ENCODE measurements at regions of chr11 and their contacts with region 1.

Region 1: GRCh38 chr11:4072668-4073285 is 21.8 kb upstream of the RRM1 start:
- DNase-seq: no peak
- ATAC-seq: peak; percentile 95
- H3K4me3 ChIP-seq: no peak overlapping the region
- H3K27ac ChIP-seq: no peak overlapping the region
- H3K4me1 ChIP-seq: peaks cover 9% of the 10 kb centered on the region
- H3K27me3 ChIP-seq: no peaks in the 10 kb centered on the region
- CTCF ChIP-seq: peak; percentile 81

Region 2: DNA sequence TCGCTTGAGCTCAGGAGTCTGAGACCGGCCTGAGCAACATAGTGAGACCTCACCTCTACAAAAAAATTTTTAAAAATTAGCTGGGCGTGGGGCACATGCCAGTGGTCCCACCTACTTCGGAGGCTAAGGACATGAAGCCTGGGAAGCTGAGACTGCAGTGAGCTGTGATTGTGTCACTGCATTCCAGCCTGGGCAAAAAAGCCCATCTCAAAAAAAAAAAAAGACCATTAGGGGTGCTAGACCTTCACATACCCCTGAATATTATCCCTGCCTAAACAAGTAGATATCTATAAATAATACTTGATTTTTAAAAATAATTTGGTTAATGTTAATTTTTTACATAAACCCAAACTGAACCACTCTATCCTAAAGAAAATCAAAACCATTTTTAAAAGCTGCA is 299.6 kb before region 1 on chr11:
- intact Hi-C with region 1: no loop called
- DNase-seq: no peak
- ATAC-seq: no peak
- H3K4me3 ChIP-seq: no peak overlapping the region
- H3K27ac ChIP-seq: no peak overlapping the region
- H3K4me1 ChIP-seq: no peaks in the 10 kb centered on the region
- H3K27me3 ChIP-seq: no peaks in the 10 kb centered on the region
- CTCF ChIP-seq: no peak

Region 3: DNA sequence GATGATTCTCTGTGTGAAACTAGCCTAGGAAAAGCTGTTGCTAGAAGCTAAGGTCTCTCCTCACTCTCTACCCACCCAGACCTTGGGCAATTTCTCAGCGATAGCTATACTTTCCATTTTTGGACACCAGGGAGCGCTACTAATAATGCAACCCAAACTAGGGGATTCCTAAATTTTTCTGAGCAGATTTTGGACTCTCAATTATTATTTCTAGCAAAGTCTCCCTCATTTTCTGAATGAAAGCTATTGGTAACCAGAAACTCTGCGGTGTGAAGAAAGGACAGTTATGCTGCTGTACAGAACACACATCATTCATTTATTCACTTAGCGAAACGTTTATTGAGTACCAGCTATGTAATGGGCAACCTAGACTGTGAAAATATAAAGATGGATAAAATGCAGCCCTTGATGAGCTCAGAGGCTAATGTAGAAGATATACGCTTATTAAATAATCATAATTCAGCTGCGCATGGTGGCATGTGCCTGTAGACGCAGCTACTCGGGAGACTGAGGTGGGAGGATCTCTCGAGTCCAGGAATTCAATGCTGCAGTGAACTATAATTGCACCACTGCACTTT is 223.4 kb before region 1 on chr11:
- intact Hi-C with region 1: loop called (anchors 5 kb)
- DNase-seq: no peak
- ATAC-seq: peak; percentile 86
- H3K4me3 ChIP-seq: no peak overlapping the region
- H3K27ac ChIP-seq: no peak overlapping the region
- H3K4me1 ChIP-seq: peaks cover 8% of the 10 kb centered on the region
- H3K27me3 ChIP-seq: no peaks in the 10 kb centered on the region
- CTCF ChIP-seq: peak; percentile 78

Region 4: DNA sequence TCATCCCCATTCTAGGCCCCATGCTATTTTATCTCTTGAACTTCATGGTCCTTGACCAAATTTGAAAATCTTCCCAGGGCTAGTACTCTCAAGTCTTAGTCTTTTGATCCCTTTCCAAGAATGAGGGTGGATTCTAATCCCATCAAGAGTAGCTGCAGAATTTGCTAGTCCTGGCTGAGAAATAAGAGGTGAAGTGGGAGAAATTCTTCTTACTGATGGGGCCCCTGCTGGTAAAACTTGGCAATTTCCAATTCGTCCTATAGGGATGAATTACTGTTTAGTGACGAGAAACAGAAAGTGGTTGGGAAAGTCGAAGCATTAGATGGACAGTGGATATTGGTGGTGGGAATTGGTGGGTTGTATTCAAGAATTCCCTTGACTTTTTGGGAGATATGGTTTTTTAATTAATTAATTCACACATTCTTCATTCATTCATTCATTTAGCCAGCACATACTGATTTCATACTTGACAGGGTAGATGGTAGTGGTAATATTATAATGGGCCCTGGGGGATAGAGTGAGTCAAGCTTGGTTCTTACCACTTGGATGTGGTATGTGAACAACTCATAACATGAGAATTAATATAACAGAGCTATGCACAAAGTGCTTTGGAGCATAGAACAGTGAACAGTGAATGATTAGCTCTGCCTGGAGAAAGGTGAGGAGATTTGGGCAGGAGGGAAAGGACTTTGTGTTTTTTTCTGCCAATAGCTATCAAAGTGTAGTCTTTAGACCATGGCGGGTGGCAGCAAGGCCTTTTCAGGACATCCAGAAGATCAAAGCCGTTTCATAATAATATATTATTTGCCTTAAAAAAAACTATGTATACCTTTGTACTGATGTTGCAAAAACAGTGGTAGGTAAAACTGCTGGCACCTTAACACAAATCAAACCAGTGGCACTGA is 113.5 kb before region 1 on chr11:
- intact Hi-C with region 1: loop called (anchors 10 kb)
- DNase-seq: no peak
- ATAC-seq: no peak
- H3K4me3 ChIP-seq: no peak overlapping the region
- H3K27ac ChIP-seq: no peak overlapping the region
- H3K4me1 ChIP-seq: no peaks in the 10 kb centered on the region
- H3K27me3 ChIP-seq: no peaks in the 10 kb centered on the region
- CTCF ChIP-seq: no peak

Measured in upper lobe of right lung (tissue), 1 donor.